ENCODE measurements at regions of chr6 and their contacts with region 1.

Region 1: DNA sequence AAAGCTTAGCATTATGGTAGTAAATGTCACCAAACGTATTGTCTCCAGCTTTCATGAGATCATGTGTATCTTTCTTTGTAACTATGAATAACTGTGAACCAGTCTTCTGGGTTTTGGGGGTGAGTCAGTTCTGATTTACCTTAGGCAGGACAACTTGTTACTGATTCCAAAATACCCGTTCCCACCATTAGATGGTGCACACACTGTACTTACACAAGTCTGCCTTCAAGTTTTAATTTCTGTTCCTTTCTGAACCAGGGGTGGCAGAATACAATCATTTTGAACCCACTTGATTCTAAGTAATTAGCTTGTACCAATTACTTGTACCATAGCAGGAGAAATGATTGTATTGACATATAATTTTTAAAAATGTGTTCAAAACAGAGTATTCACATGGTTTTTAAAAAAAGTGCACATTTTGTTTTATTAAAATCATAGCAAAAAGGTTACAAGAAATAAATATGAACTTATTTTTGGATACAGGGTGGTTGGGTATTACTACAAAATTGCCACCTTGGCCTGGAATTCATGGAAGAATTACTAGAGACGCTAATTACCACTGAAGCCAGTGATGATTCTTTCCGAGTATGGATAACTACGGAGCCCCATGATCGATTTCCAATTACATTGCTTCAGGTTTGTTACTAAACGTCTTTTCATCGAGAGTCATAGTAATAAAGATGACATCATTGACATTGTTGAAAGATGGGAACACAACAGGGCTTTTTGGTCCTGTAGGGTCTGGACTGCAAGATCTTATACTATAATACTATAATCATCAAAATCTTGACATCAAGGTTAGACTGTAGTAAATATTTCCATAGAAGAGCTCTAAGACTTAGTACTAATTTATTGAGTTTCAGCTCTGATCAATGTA is 75.2 kb upstream of the GLP1R start:
- DNase-seq: no peak
- ATAC-seq: peak; percentile 71

Region 2: DNA sequence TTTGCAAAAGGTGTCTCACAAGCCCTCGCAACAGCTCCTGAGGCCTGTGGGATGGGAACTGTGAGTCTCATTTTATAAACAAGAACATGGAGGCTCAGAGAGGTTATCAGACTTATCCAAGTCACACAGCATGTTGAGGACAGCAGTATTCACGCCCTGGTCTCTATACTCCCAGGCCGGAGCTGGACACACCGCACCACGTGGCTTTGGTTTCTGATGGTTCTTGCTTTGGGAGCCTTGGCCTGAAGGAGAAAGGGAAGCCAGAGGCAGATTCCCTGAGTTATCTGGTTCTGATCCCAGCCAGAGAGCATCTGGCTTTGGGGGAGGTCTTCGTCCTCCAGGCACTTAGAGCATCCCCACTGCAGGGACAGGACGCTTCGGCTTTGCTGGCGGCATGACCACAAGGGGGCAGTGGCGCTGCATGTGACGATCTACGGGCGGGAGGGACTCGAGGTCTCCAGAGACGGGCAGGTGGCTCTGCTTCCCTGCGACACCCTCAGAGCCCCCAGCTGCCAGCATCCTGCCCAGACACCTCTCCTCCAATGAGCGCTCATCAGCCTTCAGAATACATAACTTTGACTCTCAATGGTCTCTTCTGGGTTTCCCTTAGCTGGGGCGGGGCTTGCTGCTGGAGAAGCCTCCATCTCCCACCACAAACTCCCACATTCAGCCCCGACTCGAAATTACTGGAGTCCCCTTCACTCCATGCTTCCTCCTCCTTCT is 192.9 kb after region 1 on chr6:
- intact Hi-C with region 1: loop called (anchors 5 kb)
- DNase-seq: peak; percentile 86
- ATAC-seq: peak; percentile 68

Measured in Right ventricle myocardium inferior (tissue), 1 donor.